ENCODE measurements at regions of chr10 and their contacts with region 1.

Region 1: DNA sequence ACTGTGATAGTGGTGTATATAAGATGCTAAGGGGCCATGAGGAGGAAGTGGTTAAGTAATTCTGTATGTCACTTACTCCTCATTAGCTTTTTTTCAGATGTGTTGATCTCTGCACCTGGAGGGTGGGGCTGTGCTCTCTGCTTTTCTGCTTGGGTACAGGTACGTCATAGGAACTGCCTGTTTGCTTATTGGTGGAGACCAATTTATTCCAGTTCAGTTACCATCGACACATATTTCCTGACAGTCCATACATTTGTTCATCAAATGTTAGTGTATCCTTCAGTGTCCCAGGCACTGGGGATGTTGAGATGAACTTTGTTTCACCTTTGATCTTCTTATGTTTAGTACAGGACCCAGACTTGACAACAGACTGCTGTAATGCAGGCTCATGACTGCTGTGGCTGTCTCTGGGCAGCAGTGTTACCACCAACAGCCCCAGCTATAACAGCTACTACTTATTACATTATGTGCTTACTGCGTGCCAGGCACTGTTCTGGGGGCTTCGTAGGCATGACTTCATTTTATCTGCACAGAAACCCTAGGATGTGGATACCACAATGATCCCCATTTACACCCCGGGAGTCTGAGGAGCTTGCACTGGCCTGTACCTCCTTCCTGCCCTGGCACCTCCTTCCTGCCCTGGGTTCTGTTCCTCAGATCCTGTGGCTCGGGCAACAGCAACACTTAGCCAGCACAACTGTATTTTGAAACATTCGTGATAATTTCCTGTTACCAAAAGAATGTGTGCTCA is 87.4 kb downstream of the BUB3 start:
- DNase-seq: peak; percentile 26 to 89 (median 76)
- ATAC-seq: peak; percentile 88
- H3K4me3 Mint-ChIP-seq: peak overlapping the region; percentile 50 to 89 (median 76)
- H3K27ac Mint-ChIP-seq: peak overlapping the region; percentile 92 to 100 (median 98)
- H3K4me1 Mint-ChIP-seq: peaks cover 13 to 39% (median 34%) of the 10 kb centered on the region in 4 donors
- H3K27me3 Mint-ChIP-seq: no peaks in the 10 kb centered on the region

Region 2: GRCh38 chr10:123154092-123154921 is 87.3 kb before region 1 on chr10 and contains the start of gene BUB3:
- POLR2A ChIA-PET with region 1: interaction called, 28 read pairs
- DNase-seq: peak; percentile 73 to 97 (median 90)
- ATAC-seq: peak; percentile 87 to 90
- H3K4me3 Mint-ChIP-seq: peak within 1 kb of the TSS; percentile 94 to 100 (median 100)
- H3K27ac Mint-ChIP-seq: peak within 1 kb of the TSS; percentile 95 to 99 (median 98)
- H3K4me1 Mint-ChIP-seq: peaks cover 24 to 74% (median 72%) of the 10 kb centered on the region in 4 donors
- H3K27me3 Mint-ChIP-seq: peaks cover 0 to 19% (median 14%) of the 10 kb centered on the region in 5 donors
- polyA plus RNA-seq, gene BUB3: 217 to 247 (median 243) TPM